ENCODE measurements at regions of chr7 and their contacts with region 1.

Region 1: DNA sequence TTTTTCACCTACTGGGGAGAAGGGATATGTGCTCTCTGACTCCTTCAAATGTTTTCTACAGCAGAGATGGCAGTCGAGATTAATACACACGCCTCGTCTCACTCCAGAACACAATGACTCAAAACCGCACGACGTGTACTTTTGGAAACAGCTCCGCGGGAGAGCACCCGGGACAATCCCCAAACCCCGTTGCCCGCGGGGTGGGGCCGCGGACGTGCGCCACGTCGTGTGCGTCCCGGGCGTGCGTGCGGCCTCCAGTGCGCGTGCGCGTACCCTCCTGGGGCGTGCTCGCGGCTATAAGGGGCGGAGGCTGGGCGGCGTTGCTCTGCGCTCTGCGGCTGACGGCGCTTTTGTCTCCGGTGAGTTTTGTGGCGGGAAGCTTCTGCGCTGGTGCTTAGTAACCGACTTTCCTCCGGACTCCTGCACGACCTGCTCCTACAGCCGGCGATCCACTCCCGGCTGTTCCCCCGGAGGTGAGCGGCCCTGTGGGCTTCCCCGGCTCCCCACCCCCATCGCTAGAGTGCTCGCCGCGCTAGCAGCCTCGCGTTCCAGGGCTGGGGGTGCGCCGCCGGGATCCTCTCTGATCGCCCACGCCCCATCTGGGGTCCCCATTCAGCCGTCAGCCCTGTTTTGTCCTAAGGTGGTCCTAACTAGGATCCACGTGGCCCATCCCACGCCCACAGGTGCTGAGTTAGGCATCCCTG is at the start of gene HILPDA:
- DNase-seq: peak; percentile 97
- H3K4me3 Mint-ChIP-seq: peak within 1 kb of the TSS; percentile 96
- H3K27ac Mint-ChIP-seq: peak within 1 kb of the TSS; percentile 95
- H3K4me1 Mint-ChIP-seq: peaks cover 62% of the 10 kb centered on the region
- H3K27me3 Mint-ChIP-seq: peaks cover 5% of the 10 kb centered on the region
- total RNA-seq, gene HILPDA: 48.6 to 48.8 TPM

Region 2: GRCh38 chr7:128343554-128344430 is 111.9 kb before region 1 on chr7 and contains the start of gene RBM28:
- CTCF ChIA-PET with region 1: interaction called, 12 read pairs
- POLR2A ChIA-PET with region 1: no interaction called
- intact Hi-C with region 1: loop called (anchors 1 kb)
- DNase-seq: peak; percentile 92
- H3K4me3 Mint-ChIP-seq: peak within 1 kb of the TSS; percentile 92
- H3K27ac Mint-ChIP-seq: peak within 1 kb of the TSS; percentile 88
- H3K4me1 Mint-ChIP-seq: peaks cover 24% of the 10 kb centered on the region
- H3K27me3 Mint-ChIP-seq: peaks cover 2% of the 10 kb centered on the region
- total RNA-seq, gene RBM28: 46.2 to 56.0 TPM

Region 3: DNA sequence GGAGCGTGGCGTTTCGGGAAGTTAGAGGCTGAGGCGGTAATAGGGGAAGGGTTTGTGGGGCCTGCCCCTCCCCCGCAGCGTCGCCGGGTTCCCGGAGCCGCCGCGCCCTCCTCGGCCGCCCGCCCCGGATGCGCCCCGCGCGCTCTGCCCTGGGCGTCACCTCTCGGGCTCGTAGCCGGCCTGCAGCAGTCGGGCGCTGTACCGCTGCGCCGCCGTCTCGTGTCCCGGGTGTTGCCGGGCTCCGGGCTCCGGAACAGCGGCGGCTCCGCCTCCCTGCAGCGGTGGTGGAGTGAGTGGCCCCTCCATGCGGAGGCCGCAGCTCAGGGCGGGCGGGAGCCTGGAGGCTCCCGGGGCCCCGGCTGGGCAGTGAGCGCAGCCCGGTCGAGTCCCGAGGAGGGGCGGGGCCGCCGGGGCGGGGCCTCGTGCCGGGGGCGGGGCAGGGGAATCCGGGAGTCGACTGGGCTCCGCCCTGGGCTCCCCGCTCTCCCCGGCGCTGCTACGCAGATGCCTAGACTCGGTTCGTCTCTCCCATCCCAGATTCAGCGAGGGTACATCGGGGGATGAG is 46.0 kb before region 1 on chr7 and contains the start of gene IMPDH1:
- CTCF ChIA-PET with region 1: interaction called, 33 read pairs
- POLR2A ChIA-PET with region 1: interaction called, 3 read pairs
- intact Hi-C with region 1: loop called (anchors 1 kb)
- DNase-seq: peak; percentile 90
- H3K4me3 Mint-ChIP-seq: peak within 1 kb of the TSS; percentile 84
- H3K27ac Mint-ChIP-seq: peak within 1 kb of the TSS; percentile 60
- H3K4me1 Mint-ChIP-seq: peaks cover 28% of the 10 kb centered on the region
- H3K27me3 Mint-ChIP-seq: peaks cover 3% of the 10 kb centered on the region
- total RNA-seq, gene IMPDH1: 52.9 to 57.7 TPM

Region 4: DNA sequence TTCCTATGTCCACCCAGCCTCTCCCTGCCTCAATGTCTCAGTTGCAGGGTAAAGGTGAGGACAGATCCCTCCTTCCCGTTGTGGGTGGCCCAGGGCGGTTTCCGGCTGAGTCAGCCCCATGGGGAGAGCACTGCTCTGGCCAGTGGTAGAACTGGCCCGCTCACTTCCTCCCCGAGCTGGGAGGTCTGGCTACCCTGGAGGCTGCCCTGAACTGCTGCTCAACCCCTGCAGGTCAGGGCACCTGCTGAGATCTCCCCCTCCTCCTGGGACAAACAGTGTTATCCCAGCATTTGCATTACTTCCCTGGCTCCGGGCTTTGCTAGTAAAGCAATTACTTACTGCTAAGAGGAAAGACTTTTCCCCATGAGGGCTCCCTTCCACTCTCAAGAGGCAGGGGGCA is 24.5 kb before region 1 on chr7:
- CTCF ChIA-PET with region 1: interaction called, 381 read pairs
- POLR2A ChIA-PET with region 1: interaction called, 7 read pairs
- intact Hi-C with region 1: loop called (anchors 1 kb)
- DNase-seq: no peak
- H3K4me3 Mint-ChIP-seq: no peak overlapping the region
- H3K27ac Mint-ChIP-seq: no peak overlapping the region
- H3K4me1 Mint-ChIP-seq: no peaks in the 10 kb centered on the region
- H3K27me3 Mint-ChIP-seq: peaks cover 12% of the 10 kb centered on the region

Region 5: DNA sequence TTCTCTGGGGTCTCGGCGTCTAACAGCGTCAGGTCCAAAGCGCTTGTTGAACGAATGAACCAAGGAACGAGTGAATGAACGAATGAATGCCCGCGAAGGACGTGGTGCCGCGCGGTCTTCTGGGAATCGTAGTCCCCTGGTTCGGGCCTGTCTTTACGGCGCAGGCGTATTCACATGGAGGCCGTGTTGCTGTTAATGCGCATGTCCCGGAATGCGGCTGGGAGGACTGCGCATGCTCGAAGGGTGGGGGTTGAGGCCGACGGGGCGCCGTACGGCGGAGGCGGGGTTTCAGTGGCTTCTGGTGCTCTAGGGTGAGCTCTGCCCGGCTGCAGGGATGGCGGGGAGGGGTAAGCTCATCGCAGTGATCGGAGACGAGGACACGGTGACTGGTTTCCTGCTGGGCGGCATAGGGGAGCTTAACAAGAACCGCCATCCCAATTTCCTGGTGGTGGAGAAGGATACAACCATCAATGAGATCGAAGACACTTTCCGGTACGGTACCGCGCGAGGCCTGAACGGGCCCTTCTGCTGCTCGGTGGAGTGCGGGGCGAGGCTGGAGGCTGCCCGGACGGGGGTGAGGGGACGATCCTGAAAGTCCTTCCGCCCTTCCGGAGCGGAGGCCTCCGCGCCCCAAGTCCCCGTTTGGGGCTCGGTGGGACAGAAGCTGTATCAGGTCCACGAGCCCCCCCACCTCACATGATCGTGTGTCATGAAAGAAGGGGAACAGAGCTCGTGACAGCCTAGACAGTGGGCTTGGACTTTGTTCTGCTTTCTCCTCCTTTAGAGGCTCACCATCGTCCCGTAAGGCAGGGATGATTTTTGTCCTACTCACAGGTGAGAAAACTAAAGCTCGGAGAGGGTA is 407.1 kb after region 1 on chr7 and contains the start of gene ATP6V1F:
- CTCF ChIA-PET with region 1: no interaction called
- POLR2A ChIA-PET with region 1: no interaction called
- intact Hi-C with region 1: loop called (anchors 10 kb)
- DNase-seq: peak; percentile 100
- H3K4me3 Mint-ChIP-seq: peak within 1 kb of the TSS; percentile 98
- H3K27ac Mint-ChIP-seq: peak within 1 kb of the TSS; percentile 84
- H3K4me1 Mint-ChIP-seq: peaks cover 14% of the 10 kb centered on the region
- H3K27me3 Mint-ChIP-seq: peaks cover 1% of the 10 kb centered on the region
- total RNA-seq, gene ATP6V1F: 113 to 117 TPM

Measured in activated CD4-positive, alpha-beta memory T cell treated with anti-CD3 and anti-CD28 coated beads for 36 hours (primary cell).